ENCODE measurements at regions of chr3 and their contacts with region 1.

Region 1: DNA sequence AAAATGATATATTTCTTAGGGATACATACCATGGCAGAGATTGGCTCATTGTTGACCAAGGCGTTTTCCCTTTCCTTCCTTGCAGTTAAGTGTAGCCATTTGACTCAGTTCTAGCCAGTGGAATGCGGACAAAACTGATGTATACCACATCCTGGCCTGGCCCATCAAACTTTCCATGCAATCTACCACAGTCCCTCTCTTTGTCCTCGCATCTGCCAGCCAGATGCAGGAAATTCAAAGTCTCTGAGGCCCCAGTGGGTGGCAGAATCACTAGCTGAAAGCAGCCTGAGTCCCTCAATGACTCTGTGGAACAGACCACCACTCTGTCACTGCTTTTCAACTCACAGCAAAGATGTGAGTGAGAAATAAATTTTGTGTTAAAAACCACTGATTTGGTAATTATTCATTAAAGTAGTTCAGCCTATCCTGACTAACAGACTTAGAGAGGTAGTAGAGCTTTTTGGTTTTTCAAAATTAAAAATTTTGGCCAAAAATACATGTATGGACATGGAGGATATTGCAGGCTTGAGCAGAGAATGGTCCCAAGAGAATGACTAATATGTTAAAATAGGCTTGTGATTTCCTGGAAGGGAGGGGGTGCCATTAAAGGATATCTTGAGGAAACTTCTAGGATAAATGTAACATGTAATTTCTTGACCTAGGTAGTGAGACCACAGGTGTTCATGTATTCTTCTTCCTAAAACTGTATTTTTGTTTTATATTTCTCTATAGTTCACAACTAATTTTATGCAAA is 10.9 kb downstream of the LRRFIP2 start:
- DNase-seq: peak; percentile 1
- H3K4me3 Mint-ChIP-seq: peak overlapping the region; percentile 8
- H3K27ac Mint-ChIP-seq: peak overlapping the region; percentile 14
- H3K4me1 Mint-ChIP-seq: peaks cover 29% of the 10 kb centered on the region
- H3K27me3 Mint-ChIP-seq: peaks cover under 1% of the 10 kb centered on the region

Region 2: DNA sequence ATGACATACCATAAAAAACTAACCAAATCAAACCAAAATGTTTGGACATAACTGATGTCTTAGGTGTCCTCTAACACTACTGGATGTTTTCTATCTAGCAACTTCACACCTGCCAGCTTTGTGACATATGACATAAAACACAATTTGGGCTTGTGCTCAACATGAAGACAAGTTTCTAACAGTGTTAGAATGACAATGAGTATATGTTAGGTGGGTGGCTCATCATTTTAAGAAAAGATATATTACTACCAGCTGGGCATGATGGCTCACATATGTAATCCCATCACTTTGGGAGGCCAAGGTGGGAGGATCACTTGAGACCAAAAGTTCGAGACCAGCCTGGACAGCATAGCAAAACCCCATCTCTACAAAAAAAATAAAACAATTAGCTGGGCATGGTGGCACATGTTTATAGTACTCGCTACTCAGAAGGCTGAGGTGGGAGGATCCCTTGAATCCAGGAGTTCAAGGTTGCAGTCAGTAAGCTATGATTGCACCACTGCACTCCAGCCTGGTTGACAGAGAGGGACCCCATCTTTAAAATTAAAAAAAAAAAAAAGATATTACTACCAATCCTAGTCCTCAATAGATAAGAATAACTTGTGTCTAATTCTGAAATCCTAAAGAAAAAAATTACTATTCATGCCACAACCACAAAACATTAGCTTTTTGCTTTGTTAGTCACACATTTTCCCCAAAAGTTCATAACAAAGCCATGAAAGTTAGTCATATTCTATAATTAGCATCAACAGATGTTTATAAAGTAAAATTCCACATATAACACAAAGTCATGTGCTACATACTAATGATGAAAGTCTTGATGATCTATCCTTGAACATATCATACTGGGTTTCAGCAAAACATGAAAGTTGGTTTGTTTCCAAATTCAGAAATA is 48.9 kb before region 1 on chr3:
- intact Hi-C with region 1: loop called (anchors 1 kb)
- DNase-seq: no peak
- H3K4me3 Mint-ChIP-seq: no peak overlapping the region
- H3K27ac Mint-ChIP-seq: no peak overlapping the region
- H3K4me1 Mint-ChIP-seq: peaks cover 8% of the 10 kb centered on the region
- H3K27me3 Mint-ChIP-seq: no peaks in the 10 kb centered on the region

Region 3: DNA sequence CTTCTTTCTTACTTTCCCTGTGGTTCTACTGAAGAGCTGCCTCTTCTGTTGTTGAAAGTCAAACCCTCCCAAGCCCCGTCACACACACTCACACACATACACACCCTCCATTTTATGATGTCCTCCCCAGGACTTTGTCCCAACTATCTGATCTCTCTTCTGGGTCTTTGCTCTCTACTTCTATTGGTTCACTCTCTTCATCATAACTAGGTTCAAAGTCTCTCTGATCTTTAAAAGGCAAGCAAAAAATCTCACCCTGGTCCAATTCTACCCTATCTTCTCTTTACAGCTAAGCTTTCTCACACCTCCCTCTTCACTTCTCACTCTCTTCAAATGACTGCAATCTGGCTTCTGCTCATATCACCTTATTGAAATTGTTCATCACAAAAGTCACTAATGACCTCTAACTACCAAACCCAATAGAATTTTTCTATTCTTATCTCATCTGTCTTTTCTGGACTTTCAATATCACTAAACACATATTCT is 23.8 kb before region 1 on chr3:
- intact Hi-C with region 1: loop called (anchors 2 kb)
- DNase-seq: no peak
- H3K4me3 Mint-ChIP-seq: no peak overlapping the region
- H3K27ac Mint-ChIP-seq: no peak overlapping the region
- H3K4me1 Mint-ChIP-seq: no peaks in the 10 kb centered on the region
- H3K27me3 Mint-ChIP-seq: no peaks in the 10 kb centered on the region

Region 4: GRCh38 chr3:37174532-37175126 is 11.2 kb after region 1 on chr3 and contains the start of gene LRRFIP2:
- intact Hi-C with region 1: loop called (anchors 1 kb)
- DNase-seq: no peak
- H3K4me3 Mint-ChIP-seq: peak within 1 kb of the TSS; percentile 91
- H3K27ac Mint-ChIP-seq: peak within 1 kb of the TSS; percentile 57
- H3K4me1 Mint-ChIP-seq: peaks cover 56% of the 10 kb centered on the region
- H3K27me3 Mint-ChIP-seq: no peaks in the 10 kb centered on the region
- total RNA-seq, gene LRRFIP2: 26.2 and 28.6 TPM in 2 replicates

Measured in activated T-helper 1 cell treated with anti-CD3 and anti-CD28 coated beads, Interleukin-12 subunit alpha, Interleukin-12 subunit beta, Interleukin-2, Interleukin-4 antibody, amounts not matched to agents 30 ng/mL and 10 ng/mL and 1 ng/mL, durations not matched to agents 14 hours and 24 hours and 36 hours (primary cell).